Right ventricle myocardium inferior (tissue), 1 donor: ENCODE measurements at regions of chr1 and their contacts with region 1.

Region 1: DNA sequence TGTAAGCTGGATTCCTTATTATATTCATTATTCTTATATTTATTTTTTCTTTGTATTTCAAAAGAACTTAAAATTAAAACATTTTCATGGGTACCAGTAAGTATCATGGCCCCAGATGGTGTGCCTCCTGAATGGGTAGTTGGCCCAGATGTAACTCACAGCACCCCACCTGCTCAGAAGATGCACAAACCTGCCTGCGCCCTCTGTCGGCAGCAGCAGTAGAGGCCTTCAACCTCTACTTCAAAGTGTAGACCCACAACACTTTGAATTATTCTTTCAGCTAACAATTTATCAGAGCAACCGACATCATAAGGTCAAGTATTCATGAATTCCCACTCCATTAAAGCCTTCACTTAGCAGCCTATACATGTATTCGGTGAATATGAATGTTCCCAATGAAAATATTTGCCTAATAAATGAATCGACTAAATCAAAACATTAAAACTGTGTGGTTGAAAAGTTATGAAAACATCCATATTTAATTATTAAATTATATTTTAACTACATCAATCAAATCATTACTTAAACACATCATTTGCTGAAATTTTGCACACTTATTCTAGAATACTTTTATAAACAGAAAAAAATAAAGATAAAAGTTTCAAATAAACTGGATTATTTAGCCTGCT is 25.4 kb downstream of the PIGM start:
- DNase-seq: peak; percentile 83
- ATAC-seq: peak; percentile 57

Region 2: GRCh38 chr1:159798893-159799292 is 207.5 kb before region 1 on chr1:
- intact Hi-C with region 1: loop called (anchors 2 kb)
- DNase-seq: no peak
- ATAC-seq: peak; percentile 83

Region 3: DNA sequence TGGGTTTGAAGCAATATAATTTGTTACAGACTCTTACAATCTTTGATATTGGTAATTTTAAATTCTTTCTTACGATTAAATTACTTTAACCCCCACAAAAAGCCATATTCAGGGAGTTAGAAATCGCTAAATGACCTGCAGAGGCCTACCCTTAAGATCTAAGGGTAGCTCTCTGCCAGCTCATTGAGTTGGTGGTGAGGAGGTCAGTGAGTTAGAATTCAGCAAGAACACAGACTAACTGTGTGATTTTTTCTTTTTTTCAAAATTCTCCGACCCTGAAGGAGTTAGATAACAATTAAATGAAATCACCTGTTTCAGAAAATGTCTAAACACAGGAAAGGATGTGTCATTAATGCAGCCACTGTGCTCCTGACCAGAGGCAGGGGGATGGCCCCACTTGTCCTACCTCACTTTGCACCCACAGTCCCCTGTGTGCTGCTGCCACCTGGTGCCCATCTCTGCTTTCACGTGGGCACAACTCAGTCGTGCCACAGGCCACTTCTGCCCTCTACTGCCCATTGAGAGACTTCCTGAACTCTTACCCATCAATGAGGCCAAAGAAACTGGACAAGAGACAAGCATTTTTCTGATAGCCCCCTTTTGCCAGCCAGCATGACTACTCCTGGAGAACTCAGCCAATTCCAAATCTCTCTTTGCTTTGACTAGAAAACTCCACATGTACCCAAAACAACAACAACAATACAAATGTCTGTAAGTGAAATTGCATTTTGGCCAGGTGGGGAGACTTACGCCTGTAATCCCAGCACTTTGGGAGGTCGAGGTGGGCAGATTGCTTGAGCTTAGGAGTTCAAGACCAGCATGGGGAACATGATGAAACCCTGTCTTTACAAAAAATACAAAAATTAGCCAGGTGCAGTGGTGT is 114.9 kb before region 1 on chr1:
- intact Hi-C with region 1: no loop called
- DNase-seq: peak; percentile 89
- ATAC-seq: peak; percentile 89

Region 4: DNA sequence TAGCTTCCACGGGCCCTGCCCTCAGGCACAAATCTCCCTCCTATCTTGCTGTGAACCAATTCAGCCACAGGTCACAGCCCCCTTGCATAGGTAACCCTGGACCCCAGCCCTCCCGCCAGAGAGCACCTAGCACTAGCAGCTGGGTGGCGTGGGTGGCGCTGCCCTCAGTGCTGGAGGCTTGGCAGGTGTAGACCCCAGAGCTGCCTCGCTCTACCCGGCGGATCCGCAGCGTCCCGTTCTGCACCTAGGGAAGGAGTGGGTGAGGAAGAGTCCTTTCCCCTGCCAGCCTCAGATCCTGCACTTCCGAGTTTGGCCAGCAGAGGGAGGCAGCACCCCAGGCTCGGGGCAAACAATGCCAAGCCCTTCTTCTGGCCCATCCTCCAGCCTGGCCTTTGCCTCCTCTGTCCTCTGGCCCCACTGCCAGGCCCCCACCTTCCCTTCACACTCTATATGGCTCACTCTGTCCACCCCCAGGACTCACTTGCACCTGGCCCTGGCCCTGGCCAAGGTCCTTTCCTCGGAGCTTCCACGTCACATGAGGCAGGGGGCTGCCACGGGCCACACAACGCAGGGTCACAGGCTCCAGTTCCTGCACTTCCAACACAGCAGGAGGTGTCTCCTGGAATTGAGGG is 70.0 kb before region 1 on chr1:
- intact Hi-C with region 1: loop called (anchors 1 kb)
- DNase-seq: peak; percentile 86
- ATAC-seq: peak; percentile 45

Region 5: DNA sequence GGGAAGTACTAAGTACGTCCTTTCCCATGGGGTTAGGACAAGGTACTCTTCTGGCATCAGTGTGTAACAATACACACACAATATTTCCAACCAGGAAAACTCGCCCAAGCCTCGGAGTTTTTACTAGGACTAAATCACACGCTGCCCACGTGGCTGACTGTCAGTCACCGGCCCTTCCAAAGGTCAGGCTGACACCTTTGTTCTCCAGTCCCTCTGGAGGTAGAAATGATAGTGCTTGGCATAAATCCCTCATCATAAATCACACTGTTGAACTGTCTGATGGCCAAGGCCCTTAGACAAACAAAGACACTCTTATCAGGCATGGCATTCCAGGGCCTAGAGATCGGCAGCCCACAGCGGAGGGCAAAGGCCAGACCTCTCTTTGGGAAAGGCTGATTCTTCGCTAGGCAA is 35.5 kb before region 1 on chr1:
- intact Hi-C with region 1: no loop called
- DNase-seq: no peak
- ATAC-seq: peak; percentile 32